Mammary epithelial cell (primary cell): ENCODE measurements at regions of chr19 and their contacts with region 1.

Region 1: GRCh38 chr19:44539236-44539826 is 9.9 kb upstream of the CEACAM20 start:
- DNase-seq: peak; percentile 52
- H3K4me3 ChIP-seq: no peak overlapping the region
- H3K27ac ChIP-seq: no peak overlapping the region
- H3K4me1 ChIP-seq: no peaks in the 10 kb centered on the region
- H3K27me3 ChIP-seq: no peaks in the 10 kb centered on the region
- CTCF ChIP-seq: no peak

Region 2: DNA sequence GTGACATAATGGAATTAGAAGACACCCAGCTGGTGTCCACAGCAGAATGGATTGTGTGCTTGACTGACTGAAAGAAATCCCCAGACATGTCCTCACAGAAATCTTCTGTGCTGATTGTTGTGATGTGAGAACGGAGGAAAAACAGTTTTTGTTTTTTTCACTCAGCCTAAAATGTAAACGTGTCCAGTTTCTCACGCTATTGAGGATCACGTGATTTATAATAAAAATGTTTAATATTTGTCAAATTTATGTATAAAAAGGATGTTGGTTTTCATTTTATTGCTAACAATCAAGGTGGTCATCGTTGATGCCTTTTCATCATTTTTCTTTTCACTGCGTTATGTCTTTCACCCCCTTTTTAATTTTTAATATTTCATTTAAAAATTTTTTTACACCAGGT is 79.2 kb before region 1 on chr19:
- CTCF ChIA-PET with region 1: no interaction called
- dilution Hi-C with region 1: loop called (anchors 5 kb)
- in situ Hi-C with region 1: no loop called
- intact Hi-C with region 1: no loop called
- DNase-seq: no peak
- H3K4me3 ChIP-seq: no peak overlapping the region
- H3K27ac ChIP-seq: no peak overlapping the region
- H3K4me1 ChIP-seq: no peaks in the 10 kb centered on the region
- H3K27me3 ChIP-seq: no peaks in the 10 kb centered on the region
- CTCF ChIP-seq: no peak

Region 3: DNA sequence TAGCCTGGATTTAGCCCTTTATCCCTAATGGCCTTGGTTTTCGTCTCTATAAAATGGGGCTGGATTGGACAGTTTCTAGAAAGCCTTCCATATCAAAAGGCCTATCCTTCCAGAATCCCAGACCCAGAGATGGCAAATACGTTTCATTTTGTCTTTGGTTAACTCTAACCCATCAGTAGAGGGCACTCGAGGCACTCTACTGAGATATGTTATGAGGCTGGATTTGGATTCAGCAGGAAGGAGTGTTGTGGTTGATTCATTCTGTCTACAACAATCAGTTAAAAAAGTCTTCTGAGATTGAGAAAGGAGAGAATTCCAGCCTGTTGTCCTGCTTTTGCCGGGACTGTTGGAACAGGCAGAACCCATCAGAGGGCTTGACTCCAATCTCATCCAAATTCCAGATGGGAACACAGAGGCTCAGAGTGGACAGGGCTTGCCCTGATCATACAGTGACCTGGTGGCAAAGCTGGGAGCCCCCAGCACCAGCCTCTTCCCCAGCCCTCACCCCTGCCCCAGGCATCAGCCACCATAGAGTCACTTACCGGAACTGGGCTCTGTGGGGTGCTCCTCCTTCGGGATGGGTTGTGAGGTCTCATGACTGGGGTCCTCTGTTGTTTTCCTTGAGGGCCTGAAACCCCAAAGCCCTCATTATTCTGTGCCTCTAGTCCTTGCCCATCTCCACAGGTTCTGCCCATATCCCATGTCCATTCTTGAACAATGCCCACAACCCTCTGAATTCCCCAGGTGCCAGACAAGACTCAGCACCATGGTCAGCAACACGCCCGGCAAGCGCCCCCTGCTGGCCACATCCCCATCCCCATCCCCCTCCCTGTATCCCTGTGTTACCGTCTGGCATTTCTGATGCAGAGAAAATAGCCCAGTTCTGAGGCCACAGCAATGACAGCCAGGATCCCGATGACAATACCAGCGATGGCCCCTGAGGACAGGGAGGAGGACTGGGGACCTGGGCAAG is 26.7 kb before region 1 on chr19:
- CTCF ChIA-PET with region 1: no interaction called
- dilution Hi-C with region 1: loop called (anchors 5 kb)
- in situ Hi-C with region 1: no loop called
- intact Hi-C with region 1: no loop called
- DNase-seq: peak; percentile 61
- H3K4me3 ChIP-seq: no peak overlapping the region
- H3K27ac ChIP-seq: no peak overlapping the region
- H3K4me1 ChIP-seq: no peaks in the 10 kb centered on the region
- H3K27me3 ChIP-seq: peaks cover 5% of the 10 kb centered on the region
- CTCF ChIP-seq: peak; percentile 69 to 89

Region 4: GRCh38 chr19:44615863-44616247 is 76.5 kb after region 1 on chr19:
- CTCF ChIA-PET with region 1: no interaction called
- dilution Hi-C with region 1: loop called (anchors 5 kb)
- in situ Hi-C with region 1: no loop called
- intact Hi-C with region 1: no loop called
- DNase-seq: no peak
- H3K4me3 ChIP-seq: no peak overlapping the region
- H3K27ac ChIP-seq: no peak overlapping the region
- H3K4me1 ChIP-seq: no peaks in the 10 kb centered on the region
- H3K27me3 ChIP-seq: no peaks in the 10 kb centered on the region
- CTCF ChIP-seq: no peak